GM13976 (cell line): ENCODE measurements at regions of chr1 and their contacts with region 1.

Region 1: GRCh38 chr1:218345673-218346390 is 696 bp downstream of the TGFB2 start:
- DNase-seq: peak; percentile 69
- CTCF ChIP-seq: no peak

Region 2: DNA sequence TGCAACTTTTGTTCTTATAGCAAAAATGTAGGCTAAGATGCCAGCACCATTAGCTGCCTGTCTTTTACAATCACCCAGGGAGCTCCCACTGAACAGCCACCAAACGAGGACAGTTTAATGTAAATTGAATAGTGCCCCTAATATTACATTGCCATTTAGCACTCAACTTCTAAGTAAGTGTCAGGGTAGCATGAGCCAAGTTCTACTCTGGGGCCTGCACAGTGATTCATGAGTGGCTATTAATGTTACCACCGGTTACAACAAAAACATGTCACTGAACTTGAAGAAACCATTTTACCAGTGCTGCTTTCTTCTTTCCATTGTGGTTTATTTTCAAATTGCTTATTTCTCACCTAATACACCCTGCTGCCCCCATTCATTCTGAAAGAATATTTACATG is 356.3 kb before region 1 on chr1:
- in situ Hi-C with region 1: no loop called
- DNase-seq: no peak
- CTCF ChIP-seq: no peak

Region 3: DNA sequence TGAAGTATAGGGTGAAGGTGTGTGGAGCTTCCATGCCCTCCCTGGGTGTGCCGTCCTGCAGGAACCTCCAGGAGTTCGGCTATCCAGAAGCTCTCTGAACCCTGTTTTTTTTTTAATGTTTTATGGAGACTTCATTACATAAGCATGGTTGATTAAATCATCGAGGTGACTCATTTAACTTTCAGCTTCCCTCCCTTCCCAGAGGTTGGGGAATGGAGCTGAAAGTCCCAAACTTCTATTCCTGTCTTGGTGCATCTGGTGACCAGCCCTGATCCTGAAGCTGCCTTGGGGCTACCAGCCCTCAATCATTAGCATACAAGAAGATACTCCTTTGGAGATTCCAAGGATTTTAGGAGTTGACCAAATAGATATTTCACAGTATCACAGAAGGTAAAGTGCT is 51.3 kb before region 1 on chr1:
- in situ Hi-C with region 1: no loop called
- DNase-seq: no peak
- CTCF ChIP-seq: no peak

Region 4: GRCh38 chr1:218380151-218380977 is 34.5 kb after region 1 on chr1:
- in situ Hi-C with region 1: no loop called
- DNase-seq: no peak
- CTCF ChIP-seq: no peak

Region 5: GRCh38 chr1:219385786-219386427 is 1040.1 kb after region 1 on chr1:
- in situ Hi-C with region 1: loop called (anchors 25 kb)
- DNase-seq: peak; percentile 41
- CTCF ChIP-seq: peak; percentile 64